ENCODE measurements at regions of chr17 and their contacts with region 1.

Region 1: DNA sequence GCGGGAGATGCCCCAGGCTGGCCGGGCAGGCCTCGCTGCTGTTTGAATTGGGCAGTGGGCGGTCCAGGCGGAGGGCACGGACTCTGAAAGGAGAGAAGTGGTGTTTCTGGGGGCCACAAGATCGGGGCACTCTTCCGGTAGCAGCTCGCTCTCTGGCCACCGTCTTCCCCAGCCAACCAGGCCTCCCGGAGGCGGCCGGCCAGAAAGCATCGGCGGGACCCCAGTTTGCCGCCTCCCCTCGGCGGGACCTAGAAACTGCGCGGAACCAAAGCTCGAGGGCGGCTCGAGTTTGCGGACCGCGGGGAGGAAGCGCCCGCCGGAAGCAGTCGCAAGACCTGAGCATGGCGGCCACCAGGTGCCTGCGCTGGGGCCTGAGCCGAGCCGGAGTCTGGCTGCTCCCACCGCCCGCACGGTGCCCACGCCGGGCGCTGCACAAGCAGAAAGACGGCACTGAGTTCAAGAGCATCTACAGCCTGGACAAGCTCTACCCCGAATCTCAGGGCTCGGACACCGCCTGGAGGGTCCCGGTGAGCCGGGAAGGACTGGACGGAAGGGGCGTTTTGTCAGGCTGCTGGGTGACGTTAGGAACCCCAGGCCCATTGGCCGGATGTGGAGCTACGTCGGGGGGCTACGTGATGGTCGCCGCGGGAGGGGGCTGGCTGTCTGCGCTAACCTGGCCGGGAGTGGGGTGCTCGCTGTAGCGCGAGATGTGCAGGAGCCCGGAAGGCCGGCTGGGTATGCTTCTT is at the start of gene MRPL58:
- DNase-seq: peak; percentile 93
- ATAC-seq: peak; percentile 87
- total RNA-seq, gene MRPL58: 51.4 TPM

Region 2: GRCh38 chr17:74981979-74982662 is 30.4 kb before region 1 on chr17:
- intact Hi-C with region 1: loop called (anchors 2 kb)
- DNase-seq: peak; percentile 85
- ATAC-seq: peak; percentile 95

Region 3: GRCh38 chr17:75033346-75034235 is 21.1 kb after region 1 on chr17:
- intact Hi-C with region 1: loop called (anchors 2 kb)
- DNase-seq: peak; percentile 91
- ATAC-seq: peak; percentile 66